ENCODE measurements at regions of chr17 and their contacts with region 1.

Region 1: GRCh38 chr17:34852614-34853013 is 108.6 kb downstream of the CCT6B start:
- DNase-seq: no peak
- H3K4me3 ChIP-seq: no peak overlapping the region
- H3K27ac ChIP-seq: no peak overlapping the region
- H3K4me1 ChIP-seq: no peaks in the 10 kb centered on the region
- H3K27me3 ChIP-seq: peaks cover 0 to 22% (median 0%) of the 10 kb centered on the region in 7 donors
- CTCF ChIP-seq: no peak
- POLR2A ChIP-seq: no peak

Region 2: GRCh38 chr17:34797720-34798119 is 54.9 kb before region 1 on chr17:
- intact Hi-C with region 1: loop called (anchors 10 kb)
- DNase-seq: no peak
- H3K4me3 ChIP-seq: no peak overlapping the region
- H3K27ac ChIP-seq: no peak overlapping the region
- H3K4me1 ChIP-seq: no peaks in the 10 kb centered on the region
- H3K27me3 ChIP-seq: peaks cover 0 to 42% (median 0%) of the 10 kb centered on the region in 7 donors
- CTCF ChIP-seq: no peak
- POLR2A ChIP-seq: no peak